ENCODE measurements at regions of chr6 and their contacts with region 1.

Region 1: GRCh38 chr6:34671801-34672656 is 24.5 kb downstream of the ILRUN start:
- DNase-seq: peak; percentile 90
- ATAC-seq: peak; percentile 94
- H3K4me3 ChIP-seq: peak overlapping the region; percentile 9 to 57 (median 39)
- H3K4me3 Mint-ChIP-seq: peak overlapping the region; percentile 88
- H3K27ac ChIP-seq: peak overlapping the region; percentile 96 to 98
- H3K27ac Mint-ChIP-seq: peak overlapping the region; percentile 98
- H3K4me1 ChIP-seq: peaks cover 60 to 69% of the 10 kb centered on the region in 2 donors
- H3K4me1 Mint-ChIP-seq: peaks cover 71% of the 10 kb centered on the region
- H3K27me3 ChIP-seq: no peaks in the 10 kb centered on the region
- H3K27me3 Mint-ChIP-seq: no peaks in the 10 kb centered on the region
- CTCF ChIP-seq: no peak

Region 2: DNA sequence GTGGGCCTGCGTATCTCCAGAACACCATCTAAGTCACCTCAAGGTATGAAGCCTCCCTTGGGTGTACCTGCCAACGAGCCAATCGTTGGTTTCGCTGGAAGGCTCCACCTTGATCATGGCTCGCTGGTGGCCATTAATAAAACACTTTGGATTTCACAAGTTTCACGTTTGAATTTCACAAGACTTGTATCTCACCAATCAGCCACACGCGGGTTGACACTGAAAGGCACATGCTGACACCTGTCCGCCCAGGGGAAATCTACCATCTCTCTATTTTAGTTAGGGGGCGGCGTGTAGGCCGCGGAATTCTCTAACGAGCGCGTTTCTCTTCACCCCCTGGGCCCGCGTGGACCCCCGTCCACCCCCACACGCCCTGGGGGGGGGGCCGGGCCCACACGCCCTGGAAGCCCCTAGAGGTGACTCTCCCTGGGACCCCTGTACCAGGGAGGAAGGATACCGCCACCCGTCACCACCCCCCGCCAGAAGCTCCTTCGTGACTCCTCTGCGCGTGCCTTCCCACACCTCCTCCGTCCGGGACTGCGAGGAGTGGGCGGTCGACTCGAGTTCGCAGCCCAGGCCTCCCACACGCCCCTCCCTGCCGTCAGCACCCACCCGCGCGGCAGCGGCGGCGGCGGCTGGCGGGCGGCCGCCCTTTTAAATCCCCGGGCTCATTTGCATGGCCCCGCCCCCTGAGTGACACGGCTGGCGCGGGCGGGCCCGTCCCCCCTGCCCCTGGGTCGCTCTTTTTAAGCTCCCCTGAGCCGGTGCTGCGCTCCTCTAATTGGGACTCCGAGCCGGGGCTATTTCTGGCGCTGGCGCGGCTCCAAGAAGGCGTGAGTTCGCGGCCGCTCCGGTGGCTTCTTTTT is 435.7 kb before region 1 on chr6 and contains the start of gene HMGA1:
- CTCF ChIA-PET with region 1: no interaction called
- POLR2A ChIA-PET with region 1: no interaction called
- intact Hi-C with region 1: loop called (anchors 5 kb)
- DNase-seq: peak; percentile 96
- ATAC-seq: peak; percentile 76
- H3K4me3 ChIP-seq: peak within 1 kb of the TSS; percentile 64 to 93 (median 88)
- H3K4me3 Mint-ChIP-seq: peak within 1 kb of the TSS; percentile 92
- H3K27ac ChIP-seq: peak within 1 kb of the TSS; percentile 96 to 98
- H3K27ac Mint-ChIP-seq: peak within 1 kb of the TSS; percentile 98
- H3K4me1 ChIP-seq: peaks cover 22 to 30% of the 10 kb centered on the region in 2 donors
- H3K4me1 Mint-ChIP-seq: peaks cover 34% of the 10 kb centered on the region
- H3K27me3 ChIP-seq: no peaks in the 10 kb centered on the region
- H3K27me3 Mint-ChIP-seq: no peaks in the 10 kb centered on the region
- CTCF ChIP-seq: no peak
- total RNA-seq, gene HMGA1: 66.4 and 72.3 TPM in 2 replicates

Region 3: GRCh38 chr6:34598702-34599101 is 73.3 kb before region 1 on chr6:
- CTCF ChIA-PET with region 1: no interaction called
- POLR2A ChIA-PET with region 1: no interaction called
- intact Hi-C with region 1: no loop called
- DNase-seq: no peak
- ATAC-seq: no peak
- H3K4me3 ChIP-seq: no peak overlapping the region
- H3K4me3 Mint-ChIP-seq: no peak overlapping the region
- H3K27ac ChIP-seq: no peak overlapping the region
- H3K27ac Mint-ChIP-seq: peak overlapping the region; percentile 37
- H3K4me1 ChIP-seq: peaks cover 9 to 11% of the 10 kb centered on the region in 2 donors
- H3K4me1 Mint-ChIP-seq: peaks cover 49% of the 10 kb centered on the region
- H3K27me3 ChIP-seq: no peaks in the 10 kb centered on the region
- H3K27me3 Mint-ChIP-seq: no peaks in the 10 kb centered on the region
- CTCF ChIP-seq: no peak

Region 4: GRCh38 chr6:34638834-34639736 is 32.9 kb before region 1 on chr6:
- CTCF ChIA-PET with region 1: interaction called, 6 read pairs
- POLR2A ChIA-PET with region 1: interaction called, 4 read pairs
- intact Hi-C with region 1: loop called (anchors 2 kb)
- DNase-seq: peak; percentile 74
- ATAC-seq: peak; percentile 77
- H3K4me3 ChIP-seq: no peak overlapping the region
- H3K4me3 Mint-ChIP-seq: peak overlapping the region; percentile 79
- H3K27ac ChIP-seq: peak overlapping the region; percentile 61 to 86
- H3K27ac Mint-ChIP-seq: peak overlapping the region; percentile 70
- H3K4me1 ChIP-seq: peaks cover 17 to 21% of the 10 kb centered on the region in 2 donors
- H3K4me1 Mint-ChIP-seq: peaks cover 41% of the 10 kb centered on the region
- H3K27me3 ChIP-seq: no peaks in the 10 kb centered on the region
- H3K27me3 Mint-ChIP-seq: no peaks in the 10 kb centered on the region
- CTCF ChIP-seq: no peak

Region 5: DNA sequence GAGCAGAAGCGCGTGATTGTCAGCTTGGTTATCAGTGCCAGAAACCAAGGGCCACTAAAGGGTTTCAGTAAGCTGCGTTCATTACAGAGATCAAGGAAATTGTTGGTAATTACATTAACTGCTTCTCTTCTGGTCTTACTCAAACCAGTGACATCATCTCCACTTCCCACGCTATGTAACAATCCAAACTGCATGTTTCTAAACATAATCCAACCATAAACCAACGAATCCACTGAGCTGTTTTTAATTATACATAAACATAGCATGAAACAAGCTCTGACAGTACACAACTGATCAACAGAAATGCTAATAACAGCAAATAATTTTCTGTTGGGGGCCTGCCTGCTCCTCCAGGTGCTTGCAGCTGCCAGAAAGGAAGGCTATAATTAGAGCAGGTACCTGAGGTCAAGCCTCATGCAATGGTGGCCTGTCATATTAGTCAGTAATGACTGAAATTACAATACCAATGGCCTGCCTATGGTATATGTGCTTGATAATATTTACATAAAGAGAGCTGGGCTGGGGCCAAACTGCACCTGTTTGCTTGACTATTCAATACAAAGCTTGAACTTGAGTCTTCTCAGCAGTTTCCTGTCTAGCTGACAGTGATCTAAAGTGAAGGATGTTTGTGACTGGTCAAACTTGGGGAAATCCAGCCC is 15.5 kb before region 1 on chr6:
- CTCF ChIA-PET with region 1: interaction called, 3 read pairs
- POLR2A ChIA-PET with region 1: interaction called, 10 read pairs
- intact Hi-C with region 1: loop called (anchors 2 kb)
- DNase-seq: peak; percentile 63
- ATAC-seq: peak; percentile 71
- H3K4me3 ChIP-seq: peak overlapping the region in 3 of 5 experiments; percentile 19 to 50 (median 23)
- H3K4me3 Mint-ChIP-seq: peak overlapping the region; percentile 80
- H3K27ac ChIP-seq: peak overlapping the region; percentile 78 to 84
- H3K27ac Mint-ChIP-seq: peak overlapping the region; percentile 88
- H3K4me1 ChIP-seq: peaks cover 34 to 40% of the 10 kb centered on the region in 2 donors
- H3K4me1 Mint-ChIP-seq: peaks cover 51% of the 10 kb centered on the region
- H3K27me3 ChIP-seq: no peaks in the 10 kb centered on the region
- H3K27me3 Mint-ChIP-seq: no peaks in the 10 kb centered on the region
- CTCF ChIP-seq: no peak

Region 6: GRCh38 chr6:35452186-35453090 is 780.4 kb after region 1 on chr6 and contains the start of gene FANCE:
- CTCF ChIA-PET with region 1: no interaction called
- POLR2A ChIA-PET with region 1: no interaction called
- intact Hi-C with region 1: no loop called
- DNase-seq: peak; percentile 90
- ATAC-seq: peak; percentile 92
- H3K4me3 ChIP-seq: peak within 1 kb of the TSS; percentile 70 to 89 (median 79)
- H3K4me3 Mint-ChIP-seq: peak within 1 kb of the TSS; percentile 86
- H3K27ac ChIP-seq: peak within 1 kb of the TSS; percentile 23 to 25
- H3K27ac Mint-ChIP-seq: peak within 1 kb of the TSS; percentile 63
- H3K4me1 ChIP-seq: peaks cover 14 to 21% of the 10 kb centered on the region in 2 donors
- H3K4me1 Mint-ChIP-seq: peaks cover 33% of the 10 kb centered on the region
- H3K27me3 ChIP-seq: no peaks in the 10 kb centered on the region
- H3K27me3 Mint-ChIP-seq: no peaks in the 10 kb centered on the region
- CTCF ChIP-seq: no peak
- total RNA-seq, gene FANCE: 12.7 and 12.8 TPM in 2 replicates

Measured in B cell (primary cell).